ENCODE measurements at regions of chr2 and their contacts with region 1.

Region 1: DNA sequence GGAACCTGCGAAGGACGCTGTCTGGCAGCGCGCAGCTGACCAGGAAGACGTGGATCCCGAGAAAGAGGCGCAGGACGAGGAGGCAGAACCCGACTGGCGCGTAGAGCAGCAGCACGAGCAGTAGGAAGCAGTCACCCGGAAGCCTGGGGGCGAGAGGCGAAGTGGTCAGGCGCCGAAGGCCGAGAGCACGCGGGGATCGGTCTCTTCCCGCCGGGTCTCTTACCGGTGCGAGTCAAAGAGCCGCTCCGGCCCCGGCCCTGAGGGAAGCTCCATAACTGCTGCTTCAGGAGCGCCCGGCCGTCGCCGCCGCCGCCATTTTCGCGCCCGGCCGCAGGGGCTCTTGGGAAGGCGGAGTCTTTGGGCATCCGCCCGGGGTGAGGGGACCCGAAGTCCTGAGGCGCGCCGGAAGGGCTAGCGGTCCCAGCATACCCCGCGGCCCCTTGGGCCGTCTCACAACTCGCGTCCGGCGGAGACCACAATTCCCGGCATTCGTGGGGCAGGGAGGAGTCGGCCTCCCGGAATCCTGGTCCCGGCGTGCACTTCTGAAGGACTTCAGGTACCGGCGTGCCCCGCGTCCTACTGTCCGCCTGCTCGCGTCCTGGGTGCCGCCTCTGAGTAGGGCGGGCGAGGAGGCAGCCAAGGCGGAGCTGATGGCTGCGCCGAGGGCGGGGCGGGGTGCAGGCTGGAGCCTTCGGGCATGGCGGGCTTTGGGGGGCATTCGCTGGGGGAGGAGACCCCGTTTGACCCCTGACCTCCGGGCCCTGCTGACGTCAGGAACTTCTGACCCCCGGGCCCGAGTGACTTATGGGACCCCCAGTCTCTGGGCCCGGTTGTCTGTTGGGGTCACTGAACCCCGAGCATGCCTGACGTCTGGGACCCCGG is at the starts of genes AUP1 and HTRA2:
- DNase-seq: peak; percentile 99
- ATAC-seq: peak; percentile 97
- total RNA-seq, gene AUP1: 53.7 TPM
- total RNA-seq, gene HTRA2: 29.2 TPM

Region 2: GRCh38 chr2:74548900-74549826 is 19.6 kb after region 1 on chr2:
- intact Hi-C with region 1: loop called (anchors 2 kb)
- DNase-seq: peak; percentile 88
- ATAC-seq: peak; percentile 88

Region 3: GRCh38 chr2:74778381-74779264 is 249.0 kb after region 1 on chr2:
- intact Hi-C with region 1: no loop called
- DNase-seq: no peak
- ATAC-seq: no peak